Mammary epithelial cell (primary cell): ENCODE measurements at regions of chr9 and their contacts with region 1.

Region 1: GRCh38 chr9:17462869-17463464 is 115.9 kb upstream of the SH3GL2 start:
- DNase-seq: peak; percentile 27
- H3K4me3 ChIP-seq: no peak overlapping the region
- H3K27ac ChIP-seq: no peak overlapping the region
- H3K4me1 ChIP-seq: no peaks in the 10 kb centered on the region
- H3K27me3 ChIP-seq: no peaks in the 10 kb centered on the region
- CTCF ChIP-seq: peak; percentile 65 to 67

Region 2: GRCh38 chr9:17063535-17064135 is 399.3 kb before region 1 on chr9:
- CTCF ChIA-PET with region 1: no interaction called
- dilution Hi-C with region 1: no loop called
- in situ Hi-C with region 1: no loop called
- intact Hi-C with region 1: loop called (anchors 1 kb)
- DNase-seq: peak; percentile 31
- H3K4me3 ChIP-seq: no peak overlapping the region
- H3K27ac ChIP-seq: no peak overlapping the region
- H3K4me1 ChIP-seq: no peaks in the 10 kb centered on the region
- H3K27me3 ChIP-seq: no peaks in the 10 kb centered on the region
- CTCF ChIP-seq: peak; percentile 83 to 87

Region 3: GRCh38 chr9:17116400-17116837 is 346.5 kb before region 1 on chr9:
- CTCF ChIA-PET with region 1: no interaction called
- dilution Hi-C with region 1: no loop called
- in situ Hi-C with region 1: loop called (anchors 10 to 25 kb)
- intact Hi-C with region 1: loop called (anchors 1 kb)
- DNase-seq: peak; percentile 30
- H3K4me3 ChIP-seq: no peak overlapping the region
- H3K27ac ChIP-seq: no peak overlapping the region
- H3K4me1 ChIP-seq: no peaks in the 10 kb centered on the region
- H3K27me3 ChIP-seq: no peaks in the 10 kb centered on the region
- CTCF ChIP-seq: peak; percentile 41 to 47

Region 4: GRCh38 chr9:17219261-17219660 is 243.7 kb before region 1 on chr9:
- CTCF ChIA-PET with region 1: no interaction called
- dilution Hi-C with region 1: no loop called
- in situ Hi-C with region 1: no loop called
- intact Hi-C with region 1: loop called (anchors 2 kb)
- DNase-seq: no peak
- H3K4me3 ChIP-seq: no peak overlapping the region
- H3K27ac ChIP-seq: no peak overlapping the region
- H3K4me1 ChIP-seq: no peaks in the 10 kb centered on the region
- H3K27me3 ChIP-seq: no peaks in the 10 kb centered on the region
- CTCF ChIP-seq: peak in 1 of 2 donors; percentile 40

Region 5: GRCh38 chr9:17503184-17503583 is 40.2 kb after region 1 on chr9:
- CTCF ChIA-PET with region 1: no interaction called
- dilution Hi-C with region 1: no loop called
- in situ Hi-C with region 1: no loop called
- intact Hi-C with region 1: no loop called
- DNase-seq: no peak
- H3K4me3 ChIP-seq: no peak overlapping the region
- H3K27ac ChIP-seq: no peak overlapping the region
- H3K4me1 ChIP-seq: no peaks in the 10 kb centered on the region
- H3K27me3 ChIP-seq: no peaks in the 10 kb centered on the region
- CTCF ChIP-seq: no peak